Panc1 (cell line): ENCODE measurements at regions of chr1 and their contacts with region 1.

Region 1: DNA sequence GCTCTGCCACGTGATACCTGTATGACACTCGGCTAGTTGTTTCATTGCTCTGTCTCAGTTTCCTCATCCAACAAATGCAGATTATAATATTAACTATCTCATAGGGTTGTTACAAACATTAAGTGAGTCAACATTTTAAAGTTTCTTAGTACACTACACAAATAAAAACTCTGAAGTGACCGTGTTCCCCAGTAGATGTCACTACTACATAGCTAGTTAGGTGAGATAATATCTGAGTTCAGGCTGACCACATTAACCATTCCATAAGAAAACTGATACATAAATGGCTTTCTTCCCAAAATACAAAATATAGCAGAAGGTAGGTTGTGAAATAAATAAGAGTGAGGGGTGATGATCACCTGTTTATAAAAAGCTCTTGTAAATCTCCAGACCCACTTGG is 214.1 kb downstream of the NUF2 start:
- DNase-seq: peak; percentile 17
- ATAC-seq: no peak
- H3K4me3 ChIP-seq: no peak overlapping the region
- H3K27ac ChIP-seq: no peak overlapping the region
- H3K4me1 ChIP-seq: no peaks in the 10 kb centered on the region
- H3K27me3 ChIP-seq: no peaks in the 10 kb centered on the region
- CTCF ChIP-seq: peak; percentile 50; the same call in 1 of the 2 replicates

Region 2: GRCh38 chr1:164617377-164618201 is 1081.8 kb after region 1 on chr1:
- CTCF ChIA-PET with region 1: no interaction called
- POLR2A ChIA-PET with region 1: no interaction called
- in situ Hi-C with region 1: no loop called
- intact Hi-C with region 1: loop called (anchors 10 kb)
- DNase-seq: peak; percentile 7
- ATAC-seq: no peak
- H3K4me3 ChIP-seq: no peak overlapping the region
- H3K27ac ChIP-seq: no peak overlapping the region
- H3K4me1 ChIP-seq: no peaks in the 10 kb centered on the region
- H3K27me3 ChIP-seq: no peaks in the 10 kb centered on the region
- CTCF ChIP-seq: peak; percentile 73

Region 3: DNA sequence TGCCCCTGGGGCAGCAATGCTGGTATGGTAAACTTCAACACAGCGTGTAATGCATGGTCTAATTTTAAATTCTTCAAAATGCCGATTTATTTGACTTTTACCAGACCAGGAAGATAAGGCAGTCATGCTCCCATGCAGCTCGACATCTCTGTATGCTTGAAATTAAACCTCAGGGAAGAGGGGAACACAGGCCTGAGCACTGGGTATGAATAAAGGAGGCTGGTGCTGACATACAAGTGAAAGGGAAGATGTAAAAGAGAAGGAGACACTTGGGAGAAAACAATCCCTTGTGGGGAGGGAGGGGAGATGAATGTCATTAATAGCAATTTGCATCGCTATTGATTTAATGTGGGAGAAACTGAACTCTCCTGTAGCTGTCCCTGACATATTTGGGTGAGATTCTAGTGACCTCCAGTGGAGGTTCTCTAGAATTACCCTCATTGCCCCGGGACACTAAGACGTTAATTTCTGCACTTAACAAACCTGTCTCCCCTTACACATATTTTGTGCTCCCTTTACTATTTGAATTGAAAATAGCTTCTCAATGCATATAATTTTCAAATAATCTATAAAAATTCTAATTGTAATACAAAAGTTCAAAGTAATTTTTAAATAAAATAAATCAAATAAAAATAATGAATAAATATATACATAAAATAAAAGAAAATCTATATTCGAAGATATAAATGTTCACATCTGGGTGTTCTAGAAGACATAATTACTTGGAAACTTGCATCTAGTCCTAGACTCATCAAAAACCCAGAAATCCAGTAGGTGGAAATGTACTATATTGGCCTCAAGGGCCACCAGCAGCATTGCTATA is 1537.6 kb after region 1 on chr1:
- CTCF ChIA-PET with region 1: no interaction called
- POLR2A ChIA-PET with region 1: no interaction called
- in situ Hi-C with region 1: no loop called
- intact Hi-C with region 1: loop called (anchors 10 kb)
- DNase-seq: peak; percentile 17
- ATAC-seq: peak; percentile 81
- H3K4me3 ChIP-seq: no peak overlapping the region
- H3K27ac ChIP-seq: no peak overlapping the region
- H3K4me1 ChIP-seq: no peaks in the 10 kb centered on the region
- H3K27me3 ChIP-seq: no peaks in the 10 kb centered on the region; the same call in 1 of the 2 replicates
- CTCF ChIP-seq: peak; percentile 78